ENCODE measurements at regions of chr5 and their contacts with region 1.

Region 1: GRCh38 chr5:140468188-140468587 is 66.6 kb downstream of the ANKHD1 start:
- DNase-seq: no peak
- ATAC-seq: no peak
- H3K4me3 ChIP-seq: no peak overlapping the region
- H3K4me3 Mint-ChIP-seq: no peak overlapping the region
- H3K27ac ChIP-seq: no peak overlapping the region
- H3K27ac Mint-ChIP-seq: peak overlapping the region in 2 of 9 donors; percentile 12 to 49
- H3K4me1 ChIP-seq: no peaks in the 10 kb centered on the region
- H3K4me1 Mint-ChIP-seq: peaks cover 0 to 12% (median 3%) of the 10 kb centered on the region in 7 donors
- H3K27me3 ChIP-seq: no peaks in the 10 kb centered on the region
- H3K27me3 Mint-ChIP-seq: no peaks in the 10 kb centered on the region

Region 2: GRCh38 chr5:140502834-140503233 is 34.6 kb after region 1 on chr5:
- CTCF ChIA-PET with region 1: no interaction called
- POLR2A ChIA-PET with region 1: interaction called, 4 read pairs
- intact Hi-C with region 1: loop called in 1 of 2 experiments (anchors 5 kb)
- DNase-seq: no peak
- ATAC-seq: no peak
- H3K4me3 ChIP-seq: no peak overlapping the region
- H3K4me3 Mint-ChIP-seq: no peak overlapping the region
- H3K27ac ChIP-seq: no peak overlapping the region
- H3K27ac Mint-ChIP-seq: peak overlapping the region in 1 of 9 donors; percentile 36
- H3K4me1 ChIP-seq: no peaks in the 10 kb centered on the region
- H3K4me1 Mint-ChIP-seq: peaks cover 0 to 9% (median 5%) of the 10 kb centered on the region in 7 donors
- H3K27me3 ChIP-seq: no peaks in the 10 kb centered on the region
- H3K27me3 Mint-ChIP-seq: no peaks in the 10 kb centered on the region

Region 3: GRCh38 chr5:140725799-140726471 is 257.7 kb after region 1 on chr5:
- CTCF ChIA-PET with region 1: no interaction called
- POLR2A ChIA-PET with region 1: no interaction called
- intact Hi-C with region 1: loop called in 1 of 2 experiments (anchors 10 kb)
- DNase-seq: peak; percentile 9 to 80 (median 45)
- ATAC-seq: peak; percentile 93
- H3K4me3 ChIP-seq: peak overlapping the region; percentile 40
- H3K4me3 Mint-ChIP-seq: peak overlapping the region; percentile 37 to 81 (median 68)
- H3K27ac ChIP-seq: no peak overlapping the region
- H3K27ac Mint-ChIP-seq: peak overlapping the region in 7 of 9 donors; percentile 51 to 93 (median 77)
- H3K4me1 ChIP-seq: no peaks in the 10 kb centered on the region
- H3K4me1 Mint-ChIP-seq: peaks cover 0 to 22% (median 17%) of the 10 kb centered on the region in 7 donors
- H3K27me3 ChIP-seq: peaks cover 0 to 4% of the 10 kb centered on the region in 2 donors
- H3K27me3 Mint-ChIP-seq: peaks cover 26 to 49% (median 35%) of the 10 kb centered on the region in 5 donors

Region 4: GRCh38 chr5:140821375-140822280 is 353.4 kb after region 1 on chr5 and contains the start of gene PCDHA5:
- CTCF ChIA-PET with region 1: no interaction called
- POLR2A ChIA-PET with region 1: no interaction called
- intact Hi-C with region 1: no loop called
- DNase-seq: peak in 1 of 9 donors; percentile 20
- ATAC-seq: no peak
- H3K4me3 ChIP-seq: no peak within 1 kb of the TSS
- H3K4me3 Mint-ChIP-seq: no peak within 1 kb of the TSS
- H3K27ac ChIP-seq: no peak within 1 kb of the TSS
- H3K27ac Mint-ChIP-seq: no peak within 1 kb of the TSS
- H3K4me1 ChIP-seq: no peaks in the 10 kb centered on the region
- H3K4me1 Mint-ChIP-seq: no peaks in the 10 kb centered on the region
- H3K27me3 ChIP-seq: peaks cover 0 to 4% of the 10 kb centered on the region in 2 donors
- H3K27me3 Mint-ChIP-seq: peaks cover 0 to 47% (median 31%) of the 10 kb centered on the region in 5 donors
- total RNA-seq, gene PCDHA5: not detected

Measured in naive thymus-derived CD4-positive, alpha-beta T cell (primary cell).